Panc1 (cell line): ENCODE measurements at regions of chr4 and their contacts with region 1.

Region 1: DNA sequence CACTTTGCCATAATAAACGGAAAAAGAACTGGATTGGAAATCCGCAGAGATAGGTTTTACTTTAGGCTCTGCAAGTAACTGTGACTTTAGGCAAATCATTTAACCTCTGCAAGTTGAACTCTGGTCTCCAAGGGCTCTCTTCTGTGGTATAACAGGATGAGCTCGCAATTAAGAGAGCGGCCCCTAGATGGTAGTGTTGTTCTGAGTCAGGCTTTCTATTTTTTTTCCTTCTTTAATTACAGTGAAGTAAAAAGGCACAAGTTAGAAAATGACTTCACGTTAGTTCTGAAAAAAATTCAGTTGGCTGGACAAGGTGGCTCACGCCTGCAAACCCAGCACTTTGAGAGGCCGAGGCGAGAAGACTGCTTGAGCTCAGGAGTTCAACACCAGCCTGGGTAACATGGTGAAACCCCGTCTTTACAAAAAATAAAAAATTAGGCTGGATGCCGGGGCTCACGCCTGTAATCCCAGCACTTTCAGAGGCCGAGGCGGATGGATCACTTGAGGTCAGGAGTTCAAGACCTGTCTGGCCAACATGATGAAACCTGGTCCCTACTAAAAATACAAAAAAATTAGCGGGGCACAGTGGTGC is 18.0 kb downstream of the RPS3A start:
- DNase-seq: peak; percentile 39
- ATAC-seq: peak; percentile 88
- H3K4me3 ChIP-seq: no peak overlapping the region
- H3K27ac ChIP-seq: no peak overlapping the region
- H3K4me1 ChIP-seq: no peaks in the 10 kb centered on the region
- H3K27me3 ChIP-seq: no peaks in the 10 kb centered on the region
- CTCF ChIP-seq: peak; percentile 78

Region 2: DNA sequence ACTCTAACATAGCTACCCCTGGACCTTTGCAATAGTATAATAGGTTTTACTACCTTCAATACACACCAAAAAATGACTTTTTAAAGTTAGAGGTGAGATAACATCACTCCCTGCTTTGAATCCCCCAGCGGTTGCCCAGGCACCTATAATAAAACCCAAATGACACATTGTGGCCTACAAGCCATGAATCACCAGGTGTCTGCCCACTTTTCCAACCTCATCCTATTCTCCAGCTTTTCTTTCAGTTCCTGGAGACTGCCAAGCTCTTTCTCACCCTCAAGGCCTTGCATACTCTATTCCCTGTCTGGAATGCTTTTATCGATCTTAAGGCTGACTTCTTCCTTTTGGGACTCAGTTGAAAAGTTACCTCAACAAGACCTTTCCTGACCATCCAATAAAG is 143.1 kb after region 1 on chr4:
- CTCF ChIA-PET with region 1: interaction called, 13 read pairs
- POLR2A ChIA-PET with region 1: no interaction called
- in situ Hi-C with region 1: no loop called
- intact Hi-C with region 1: no loop called
- DNase-seq: no peak
- ATAC-seq: no peak
- H3K4me3 ChIP-seq: no peak overlapping the region
- H3K27ac ChIP-seq: no peak overlapping the region
- H3K4me1 ChIP-seq: no peaks in the 10 kb centered on the region
- H3K27me3 ChIP-seq: no peaks in the 10 kb centered on the region
- CTCF ChIP-seq: no peak

Region 3: GRCh38 chr4:151362404-151363164 is 245.1 kb after region 1 on chr4:
- CTCF ChIA-PET with region 1: interaction called, 3 read pairs
- POLR2A ChIA-PET with region 1: no interaction called
- in situ Hi-C with region 1: no loop called
- intact Hi-C with region 1: loop called (anchors 5 kb)
- DNase-seq: peak; percentile 75
- ATAC-seq: peak; percentile 99
- H3K4me3 ChIP-seq: peak overlapping the region in 1 of 2 experiments; percentile 27; a peak in 2 of 4 replicates
- H3K27ac ChIP-seq: no peak overlapping the region
- H3K4me1 ChIP-seq: no peaks in the 10 kb centered on the region
- H3K27me3 ChIP-seq: no peaks in the 10 kb centered on the region
- CTCF ChIP-seq: peak; percentile 91

Region 4: GRCh38 chr4:151614561-151614960 is 497.1 kb after region 1 on chr4:
- CTCF ChIA-PET with region 1: no interaction called
- POLR2A ChIA-PET with region 1: no interaction called
- in situ Hi-C with region 1: no loop called
- intact Hi-C with region 1: loop called (anchors 5 kb)
- DNase-seq: no peak
- ATAC-seq: no peak
- H3K4me3 ChIP-seq: no peak overlapping the region
- H3K27ac ChIP-seq: no peak overlapping the region
- H3K4me1 ChIP-seq: no peaks in the 10 kb centered on the region
- H3K27me3 ChIP-seq: no peaks in the 10 kb centered on the region; the same call in none of the 2 replicates
- CTCF ChIP-seq: no peak